Psoas muscle (tissue), 8 donors: ENCODE measurements at regions of chr14 and their contacts with region 1.

Region 1: DNA sequence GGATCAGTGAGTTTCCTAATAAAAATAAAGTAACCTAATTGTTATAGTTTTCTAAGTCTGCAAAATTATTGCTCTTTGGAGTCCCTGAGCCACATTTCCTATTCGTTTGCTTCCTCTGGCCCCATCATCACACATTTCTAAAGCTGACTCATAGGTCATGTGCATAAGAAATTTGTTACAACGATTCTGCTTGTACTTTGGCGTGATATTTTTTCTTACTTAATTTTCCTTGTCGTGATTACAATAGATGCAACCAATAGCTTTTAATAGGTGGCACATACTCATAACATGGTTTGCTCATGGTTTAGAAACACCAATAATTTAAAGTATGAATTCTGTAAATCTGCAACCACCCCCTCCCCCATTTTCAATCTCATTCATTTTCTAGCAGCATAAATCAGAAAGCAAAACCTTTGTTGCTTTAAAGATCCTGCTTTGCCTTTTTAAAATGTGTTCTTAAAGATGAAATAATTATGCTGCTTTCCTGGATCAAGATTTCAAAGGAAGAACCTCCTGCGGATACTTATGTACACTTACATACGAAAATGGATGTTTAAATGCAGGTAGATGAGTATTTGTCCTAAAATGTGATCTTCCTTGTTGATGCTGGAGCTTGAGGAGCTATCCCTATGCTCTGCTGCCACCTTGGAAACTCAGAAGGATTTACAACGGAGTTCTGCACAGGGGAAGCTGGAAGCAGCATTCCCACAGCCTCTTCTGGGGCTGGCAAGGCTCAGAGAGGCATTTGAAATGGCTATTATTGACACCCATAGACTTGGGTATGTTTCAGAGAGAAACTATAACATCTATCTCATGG is 1.7 kb upstream of the FLRT2 start:
- DNase-seq: peak in 1 of 2 donors; percentile 38
- ATAC-seq: peak in 1 of 4 donors; percentile 26
- H3K4me3 ChIP-seq: peak overlapping the region; percentile 77
- H3K27ac ChIP-seq: peak overlapping the region; percentile 56
- H3K4me1 ChIP-seq: no peaks in the 10 kb centered on the region
- H3K27me3 ChIP-seq: peaks cover 0 to 33% (median 9%) of the 10 kb centered on the region in 3 donors
- CTCF ChIP-seq: peak; percentile 41

Region 2: DNA sequence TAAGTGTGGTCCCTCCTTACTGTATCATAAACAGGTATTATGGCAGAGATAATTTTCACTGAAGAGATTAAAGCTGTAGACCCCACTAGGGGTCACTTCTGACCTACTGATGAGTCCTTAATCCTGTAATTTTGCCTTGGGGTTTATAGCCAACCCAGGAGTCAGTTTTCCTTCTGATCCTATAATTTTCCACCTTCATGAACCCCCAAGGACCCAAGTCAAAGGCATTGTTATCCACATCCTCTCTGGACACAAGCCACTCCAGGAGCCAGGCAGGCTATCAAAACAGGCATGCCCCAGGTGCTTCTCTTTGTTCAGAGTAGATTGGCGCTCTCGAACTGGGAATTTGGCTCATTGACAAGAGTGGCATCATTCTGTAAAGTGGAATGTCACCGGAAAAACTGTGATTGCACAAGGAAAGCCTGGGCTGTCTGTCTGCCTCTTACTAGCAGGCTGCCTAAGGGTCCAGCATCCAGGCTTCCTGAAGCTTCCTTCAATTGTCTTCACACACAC is 1521.6 kb before region 1 on chr14:
- intact Hi-C with region 1: loop called in 1 of 2 experiments (anchors 10 kb)
- DNase-seq: no peak
- ATAC-seq: no peak
- H3K4me3 ChIP-seq: no peak overlapping the region
- H3K27ac ChIP-seq: no peak overlapping the region
- H3K4me1 ChIP-seq: no peaks in the 10 kb centered on the region
- H3K27me3 ChIP-seq: no peaks in the 10 kb centered on the region
- CTCF ChIP-seq: peak; percentile 14

Region 3: GRCh38 chr14:85195872-85196477 is 332.3 kb before region 1 on chr14:
- intact Hi-C with region 1: loop called in 1 of 2 experiments (anchors 10 kb)
- DNase-seq: no peak
- ATAC-seq: no peak
- H3K4me3 ChIP-seq: no peak overlapping the region
- H3K27ac ChIP-seq: no peak overlapping the region
- H3K4me1 ChIP-seq: no peaks in the 10 kb centered on the region
- H3K27me3 ChIP-seq: no peaks in the 10 kb centered on the region
- CTCF ChIP-seq: peak; percentile 32

Region 4: GRCh38 chr14:85399186-85399585 is 129.1 kb before region 1 on chr14:
- intact Hi-C with region 1: no loop called
- DNase-seq: no peak
- ATAC-seq: no peak
- H3K4me3 ChIP-seq: no peak overlapping the region
- H3K27ac ChIP-seq: no peak overlapping the region
- H3K4me1 ChIP-seq: no peaks in the 10 kb centered on the region
- H3K27me3 ChIP-seq: no peaks in the 10 kb centered on the region
- CTCF ChIP-seq: no peak

Region 5: GRCh38 chr14:85617791-85618190 is 89.5 kb after region 1 on chr14:
- intact Hi-C with region 1: loop called (anchors 5 to 10 kb)
- DNase-seq: no peak
- ATAC-seq: no peak
- H3K4me3 ChIP-seq: no peak overlapping the region
- H3K27ac ChIP-seq: no peak overlapping the region
- H3K4me1 ChIP-seq: no peaks in the 10 kb centered on the region
- H3K27me3 ChIP-seq: no peaks in the 10 kb centered on the region
- CTCF ChIP-seq: no peak

Region 6: DNA sequence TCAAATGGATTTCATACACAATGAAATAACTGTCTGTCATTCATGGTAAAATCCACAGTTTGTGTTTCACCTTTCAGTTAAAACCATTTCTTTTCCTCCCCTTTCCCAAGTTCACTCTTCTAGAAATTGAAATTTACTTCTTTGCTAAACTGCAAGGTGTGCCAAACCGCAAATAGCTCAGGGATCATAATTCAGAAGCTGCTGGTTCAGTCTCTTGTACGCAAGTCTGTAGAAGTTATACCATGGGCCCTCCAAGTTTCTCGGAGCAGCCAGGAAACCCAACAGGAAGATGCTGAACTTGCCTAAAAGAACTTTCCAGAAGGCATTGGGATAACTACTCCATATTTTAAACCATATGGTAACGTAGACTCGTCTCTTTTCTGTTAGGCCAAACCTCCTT is 270.6 kb after region 1 on chr14:
- intact Hi-C with region 1: loop called in 1 of 2 experiments (anchors 10 kb)
- DNase-seq: no peak
- ATAC-seq: peak in 2 of 4 donors; percentile 68 to 77
- H3K4me3 ChIP-seq: no peak overlapping the region
- H3K27ac ChIP-seq: peak overlapping the region; percentile 56
- H3K4me1 ChIP-seq: no peaks in the 10 kb centered on the region
- H3K27me3 ChIP-seq: no peaks in the 10 kb centered on the region
- CTCF ChIP-seq: no peak

Region 7: GRCh38 chr14:86057018-86057667 is 528.9 kb after region 1 on chr14:
- intact Hi-C with region 1: loop called in 1 of 2 experiments (anchors 5 kb)
- DNase-seq: no peak
- ATAC-seq: peak in 1 of 4 donors; percentile 58
- H3K4me3 ChIP-seq: no peak overlapping the region
- H3K27ac ChIP-seq: no peak overlapping the region
- H3K4me1 ChIP-seq: no peaks in the 10 kb centered on the region
- H3K27me3 ChIP-seq: no peaks in the 10 kb centered on the region
- CTCF ChIP-seq: peak; percentile 65